Activated CD4-positive, alpha-beta T cell treated with anti-CD3 and anti-CD28 coated beads, Interleukin-2, amount 10 ng/mL, durations not matched to agents 7 days and 5 days (primary cell): ENCODE measurements at regions of chr17 and their contacts with region 1.

Region 1: GRCh38 chr17:10899281-10899680 is 61.4 kb upstream of the PIRT start:
- DNase-seq: no peak
- H3K4me3 Mint-ChIP-seq: no peak overlapping the region
- H3K27ac Mint-ChIP-seq: no peak overlapping the region
- H3K4me1 Mint-ChIP-seq: no peaks in the 10 kb centered on the region
- H3K27me3 Mint-ChIP-seq: no peaks in the 10 kb centered on the region

Region 2: DNA sequence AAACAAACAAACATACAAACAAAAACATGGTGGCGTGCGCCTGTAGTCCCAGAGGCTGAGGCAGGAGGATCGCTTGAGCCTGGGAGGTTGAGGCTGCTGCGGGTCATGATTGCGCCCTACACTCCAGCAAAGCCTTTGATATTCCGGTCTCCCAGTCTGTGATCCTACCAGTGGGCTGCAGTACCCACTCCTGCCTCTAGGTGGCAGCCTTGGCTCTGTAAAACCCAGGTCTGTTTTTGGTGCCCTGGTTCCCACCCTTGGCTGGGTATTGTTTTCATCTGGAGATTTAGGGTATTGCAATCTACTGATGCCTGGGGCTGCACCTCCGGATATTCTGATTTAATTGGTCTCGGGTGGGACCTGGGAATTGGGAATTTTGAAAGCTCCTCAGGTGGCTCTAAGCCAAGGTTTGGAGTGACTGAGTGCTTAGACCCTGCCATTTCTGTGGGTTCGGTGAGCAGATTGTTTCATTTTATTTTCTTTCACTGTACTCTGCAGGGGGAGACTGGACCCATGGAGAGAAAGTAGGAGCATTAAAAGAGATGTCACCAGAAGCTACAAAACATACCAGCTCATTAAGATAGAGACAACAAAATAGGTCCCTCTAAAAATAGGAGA is 282.7 kb before region 1 on chr17:
- CTCF ChIA-PET with region 1: no interaction called
- POLR2A ChIA-PET with region 1: interaction called, 10 read pairs
- DNase-seq: peak; percentile 72
- H3K4me3 Mint-ChIP-seq: no peak overlapping the region
- H3K27ac Mint-ChIP-seq: no peak overlapping the region
- H3K4me1 Mint-ChIP-seq: peaks cover 2% of the 10 kb centered on the region
- H3K27me3 Mint-ChIP-seq: no peaks in the 10 kb centered on the region

Region 3: GRCh38 chr17:12445331-12445730 is 1546.0 kb after region 1 on chr17:
- CTCF ChIA-PET with region 1: no interaction called
- POLR2A ChIA-PET with region 1: no interaction called
- DNase-seq: no peak
- H3K4me3 Mint-ChIP-seq: no peak overlapping the region
- H3K27ac Mint-ChIP-seq: no peak overlapping the region
- H3K4me1 Mint-ChIP-seq: no peaks in the 10 kb centered on the region
- H3K27me3 Mint-ChIP-seq: no peaks in the 10 kb centered on the region